Activated T-helper 1 cell treated with anti-CD3 and anti-CD28 coated beads, Interleukin-12 subunit alpha, Interleukin-12 subunit beta, Interleukin-2, Interleukin-4 antibody, amounts not matched to agents 30 ng/mL and 10 ng/mL and 1 ng/mL, durations not matched to agents 14 hours and 24 hours and 36 hours (primary cell): ENCODE measurements at regions of chr4 and their contacts with region 1.

Region 1: DNA sequence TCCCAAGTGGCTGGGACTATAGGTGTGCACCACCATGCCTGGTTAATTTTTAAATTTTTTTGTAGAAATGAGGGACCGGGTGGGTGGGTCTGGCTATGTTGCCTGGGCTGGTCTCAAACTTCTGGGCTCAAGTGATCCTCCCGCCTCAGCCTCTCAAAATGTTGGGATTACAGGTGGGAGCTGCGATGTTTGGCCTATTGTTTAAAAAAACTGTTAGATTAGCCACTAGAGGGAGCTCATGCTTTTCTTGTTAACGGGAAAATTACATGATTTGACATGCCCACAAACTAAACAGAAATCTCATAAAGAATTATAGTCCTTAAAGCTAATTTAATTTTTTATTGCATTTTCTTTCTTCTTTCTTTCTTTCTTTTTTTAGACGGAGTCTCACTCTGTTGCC is 5.0 kb upstream of the SDAD1 start:
- DNase-seq: no peak
- H3K4me3 Mint-ChIP-seq: no peak overlapping the region
- H3K27ac Mint-ChIP-seq: no peak overlapping the region
- H3K4me1 Mint-ChIP-seq: no peaks in the 10 kb centered on the region
- H3K27me3 Mint-ChIP-seq: peaks cover 2% of the 10 kb centered on the region

Region 2: DNA sequence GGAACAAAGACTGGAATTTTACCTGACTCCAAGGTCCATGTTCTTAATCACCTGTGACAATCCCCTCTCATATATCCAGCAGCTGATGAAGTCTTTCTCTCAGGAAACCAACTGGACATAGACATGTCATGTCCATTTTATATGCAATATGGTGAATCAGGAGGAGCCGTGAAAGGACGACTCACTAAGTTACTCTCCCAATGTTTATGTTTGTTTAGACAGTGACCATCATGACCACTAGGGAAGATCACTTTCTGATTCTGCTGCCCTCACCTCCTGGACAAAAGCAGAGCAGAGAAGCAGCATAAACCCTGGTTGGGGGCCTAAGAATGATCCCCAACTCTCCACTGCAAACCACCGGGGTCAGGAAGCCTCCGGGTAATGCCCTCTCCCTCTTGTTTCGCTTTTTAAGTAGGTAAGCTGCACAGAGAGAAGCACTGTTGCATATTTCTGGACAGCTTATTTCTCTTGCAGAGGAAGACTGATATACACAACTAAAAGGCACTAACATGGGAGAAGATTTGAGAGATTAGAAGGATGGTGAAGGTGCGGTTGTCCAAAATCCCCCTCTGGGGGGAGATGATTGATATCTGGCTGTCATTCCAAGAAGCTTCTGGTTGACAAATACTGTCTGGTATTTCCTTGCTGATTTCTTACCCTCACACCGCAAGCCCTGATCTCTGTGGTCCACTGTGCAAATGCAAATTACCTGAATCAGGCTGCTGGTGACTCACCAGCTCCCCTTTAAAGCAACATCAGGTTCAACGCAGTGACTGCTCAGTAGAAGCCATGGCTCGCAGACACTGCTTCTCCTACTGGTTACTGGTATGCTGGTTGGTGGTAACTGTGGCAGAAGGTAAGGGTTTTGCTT is 440.2 kb before region 1 on chr4 and contains the start of gene ODAPH:
- intact Hi-C with region 1: no loop called
- DNase-seq: peak; percentile 6
- H3K4me3 Mint-ChIP-seq: no peak within 1 kb of the TSS
- H3K27ac Mint-ChIP-seq: no peak within 1 kb of the TSS
- H3K4me1 Mint-ChIP-seq: peaks cover 5% of the 10 kb centered on the region
- H3K27me3 Mint-ChIP-seq: no peaks in the 10 kb centered on the region
- total RNA-seq, gene ODAPH: 0.54 and 1.4 TPM in 2 replicates

Region 3: DNA sequence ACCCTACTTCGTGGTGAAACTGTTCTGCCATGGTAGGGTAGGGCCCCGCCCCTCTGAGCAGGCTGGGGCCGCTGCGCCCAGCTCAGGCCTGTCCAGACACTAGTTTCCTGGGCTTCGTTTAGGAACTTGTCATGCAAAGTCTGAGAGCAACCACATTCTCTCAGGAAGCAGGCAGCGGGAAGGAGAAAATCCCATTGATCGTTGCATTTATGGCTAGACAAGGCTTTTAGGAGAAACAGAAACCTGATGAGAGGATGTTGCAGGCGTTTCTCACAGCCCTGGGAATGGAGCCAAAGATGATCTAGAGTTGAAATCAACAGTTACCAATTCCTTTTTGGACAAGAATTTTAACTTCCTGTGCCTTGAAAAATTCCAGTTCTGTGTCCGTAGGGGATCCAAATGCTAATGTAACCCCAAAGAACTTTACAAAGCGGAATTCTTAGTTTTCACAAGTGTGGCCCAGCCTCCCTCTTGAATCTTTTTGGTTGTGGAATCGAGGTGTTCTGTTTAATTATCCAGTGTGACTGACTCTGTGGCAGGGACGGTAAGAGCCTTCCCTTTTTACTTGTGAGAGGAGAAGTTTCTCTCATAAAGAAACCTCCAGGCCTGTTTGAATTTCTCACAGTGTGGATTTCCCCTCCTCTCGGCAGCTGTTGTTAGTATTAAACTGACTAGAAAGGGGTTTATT is 16.1 kb after region 1 on chr4:
- intact Hi-C with region 1: loop called (anchors 2 kb)
- DNase-seq: no peak
- H3K4me3 Mint-ChIP-seq: no peak overlapping the region
- H3K27ac Mint-ChIP-seq: no peak overlapping the region
- H3K4me1 Mint-ChIP-seq: peaks cover 9% of the 10 kb centered on the region
- H3K27me3 Mint-ChIP-seq: peaks cover 9% of the 10 kb centered on the region

Region 4: DNA sequence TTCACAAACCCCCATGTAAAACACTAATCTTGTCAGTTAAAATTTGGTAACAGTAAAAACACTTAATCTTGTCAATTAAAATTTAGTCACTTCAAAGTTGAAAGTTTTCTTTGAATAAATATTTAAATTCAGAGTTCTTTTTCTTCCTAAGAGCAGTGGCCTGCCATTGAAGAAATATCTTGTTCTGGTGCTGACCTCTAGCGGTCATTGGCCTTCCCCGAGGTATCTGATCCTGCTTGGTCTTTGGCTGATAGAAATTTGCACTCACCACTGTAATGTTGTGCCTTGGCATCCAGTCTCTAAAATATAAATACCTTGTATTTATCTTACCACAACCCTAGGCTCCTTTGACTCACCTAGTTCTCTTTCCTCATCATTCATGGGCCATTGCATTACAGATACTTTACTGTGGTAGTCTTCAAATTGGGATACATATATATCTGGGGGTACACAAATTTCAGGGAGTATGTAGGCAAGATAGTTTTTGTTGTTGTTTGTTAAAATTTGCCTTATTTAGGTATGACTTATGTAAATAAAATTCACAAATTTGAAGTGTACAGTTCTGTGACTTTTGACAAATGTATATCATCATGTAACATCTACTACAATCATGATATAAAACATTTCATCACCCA is 72.0 kb after region 1 on chr4:
- intact Hi-C with region 1: loop called (anchors 1 kb)
- DNase-seq: peak; percentile 66
- H3K4me3 Mint-ChIP-seq: no peak overlapping the region
- H3K27ac Mint-ChIP-seq: no peak overlapping the region
- H3K4me1 Mint-ChIP-seq: peaks cover 8% of the 10 kb centered on the region
- H3K27me3 Mint-ChIP-seq: no peaks in the 10 kb centered on the region

Region 5: GRCh38 chr4:76305971-76306881 is 310.5 kb after region 1 on chr4 and contains the start of gene STBD1:
- intact Hi-C with region 1: loop called (anchors 10 kb)
- DNase-seq: peak; percentile 24
- H3K4me3 Mint-ChIP-seq: peak within 1 kb of the TSS; percentile 68
- H3K27ac Mint-ChIP-seq: peak within 1 kb of the TSS; percentile 24
- H3K4me1 Mint-ChIP-seq: peaks cover 48% of the 10 kb centered on the region
- H3K27me3 Mint-ChIP-seq: peaks cover 16% of the 10 kb centered on the region
- total RNA-seq, gene STBD1: 0.51 and 0.57 TPM in 2 replicates

Region 6: GRCh38 chr4:76504613-76505465 is 509.1 kb after region 1 on chr4:
- intact Hi-C with region 1: loop called (anchors 5 kb)
- DNase-seq: no peak
- H3K4me3 Mint-ChIP-seq: no peak overlapping the region
- H3K27ac Mint-ChIP-seq: no peak overlapping the region
- H3K4me1 Mint-ChIP-seq: no peaks in the 10 kb centered on the region
- H3K27me3 Mint-ChIP-seq: no peaks in the 10 kb centered on the region